CD8-positive, alpha-beta memory T cell (primary cell): ENCODE measurements at regions of chr5 and their contacts with region 1.

Region 1: GRCh38 chr5:99060306-99061261 is 131.8 kb upstream of the CHD1 start:
- DNase-seq: peak; percentile 75 to 89 (median 81)
- H3K4me3 ChIP-seq: no peak overlapping the region
- H3K4me3 Mint-ChIP-seq: peak overlapping the region in 5 of 7 donors; percentile 23 to 68 (median 42)
- H3K27ac ChIP-seq: no peak overlapping the region
- H3K27ac Mint-ChIP-seq: peak overlapping the region in 1 of 8 donors; percentile 22
- H3K4me1 ChIP-seq: peaks cover 5% of the 10 kb centered on the region
- H3K4me1 Mint-ChIP-seq: peaks cover 4 to 9% (median 9%) of the 10 kb centered on the region in 3 donors
- H3K27me3 ChIP-seq: peaks cover 4% of the 10 kb centered on the region
- H3K27me3 Mint-ChIP-seq: peaks cover 3 to 15% of the 10 kb centered on the region in 2 donors

Region 2: DNA sequence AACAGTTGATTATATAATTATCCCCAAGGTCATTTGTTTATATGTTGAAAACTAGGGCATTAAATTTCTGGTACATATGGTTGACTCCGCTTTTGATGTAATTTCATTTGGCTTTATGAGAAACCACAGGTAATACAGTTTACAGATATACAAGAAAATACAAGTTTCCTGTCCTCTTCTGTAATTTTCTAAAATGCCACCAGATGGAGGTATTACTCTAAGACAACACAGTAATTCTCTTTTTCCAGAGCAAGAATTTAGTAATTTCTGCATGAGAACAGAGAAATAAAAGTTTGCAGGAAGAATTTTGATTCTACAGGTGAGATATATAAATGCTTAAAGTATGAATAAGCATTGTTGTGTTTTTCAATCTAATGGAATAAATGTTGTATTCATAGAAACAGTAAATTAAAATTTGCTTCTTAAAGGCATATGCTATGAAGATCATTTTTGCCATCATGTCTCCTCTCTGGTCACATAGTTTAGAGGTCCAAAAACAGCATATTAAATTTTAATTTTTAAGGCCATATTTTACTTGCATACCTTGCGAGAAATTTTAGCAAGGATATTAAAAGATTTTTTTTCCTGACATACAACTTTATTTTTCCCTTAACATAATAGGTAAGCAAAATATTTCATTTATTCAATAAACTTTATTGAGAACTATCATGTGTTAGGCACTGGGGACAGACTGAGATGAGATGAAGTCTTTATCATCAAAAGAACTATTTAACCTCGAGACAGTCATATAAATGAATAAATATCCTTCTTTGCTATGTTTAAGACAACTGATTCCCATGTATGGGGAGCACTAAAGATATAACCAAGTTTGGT is 154.5 kb before region 1 on chr5:
- CTCF ChIA-PET with region 1: interaction called, 35 read pairs
- POLR2A ChIA-PET with region 1: interaction called, 4 read pairs
- DNase-seq: peak in 2 of 5 donors; percentile 47 to 60
- H3K4me3 ChIP-seq: no peak overlapping the region
- H3K4me3 Mint-ChIP-seq: no peak overlapping the region
- H3K27ac ChIP-seq: no peak overlapping the region
- H3K27ac Mint-ChIP-seq: peak overlapping the region in 6 of 8 donors; percentile 0 to 76 (median 52)
- H3K4me1 ChIP-seq: peaks cover 6% of the 10 kb centered on the region
- H3K4me1 Mint-ChIP-seq: peaks cover 44 to 73% (median 60%) of the 10 kb centered on the region in 3 donors
- H3K27me3 ChIP-seq: no peaks in the 10 kb centered on the region
- H3K27me3 Mint-ChIP-seq: no peaks in the 10 kb centered on the region

Region 3: GRCh38 chr5:98913911-98914310 is 146.7 kb before region 1 on chr5:
- CTCF ChIA-PET with region 1: interaction called, 15 read pairs
- POLR2A ChIA-PET with region 1: no interaction called
- DNase-seq: no peak
- H3K4me3 ChIP-seq: no peak overlapping the region
- H3K4me3 Mint-ChIP-seq: peak overlapping the region in 1 of 7 donors; percentile 25
- H3K27ac ChIP-seq: no peak overlapping the region
- H3K27ac Mint-ChIP-seq: peak overlapping the region in 6 of 8 donors; percentile 0 to 47 (median 28)
- H3K4me1 ChIP-seq: peaks cover 36% of the 10 kb centered on the region
- H3K4me1 Mint-ChIP-seq: peaks cover 67 to 90% (median 87%) of the 10 kb centered on the region in 3 donors
- H3K27me3 ChIP-seq: no peaks in the 10 kb centered on the region
- H3K27me3 Mint-ChIP-seq: no peaks in the 10 kb centered on the region

Region 4: DNA sequence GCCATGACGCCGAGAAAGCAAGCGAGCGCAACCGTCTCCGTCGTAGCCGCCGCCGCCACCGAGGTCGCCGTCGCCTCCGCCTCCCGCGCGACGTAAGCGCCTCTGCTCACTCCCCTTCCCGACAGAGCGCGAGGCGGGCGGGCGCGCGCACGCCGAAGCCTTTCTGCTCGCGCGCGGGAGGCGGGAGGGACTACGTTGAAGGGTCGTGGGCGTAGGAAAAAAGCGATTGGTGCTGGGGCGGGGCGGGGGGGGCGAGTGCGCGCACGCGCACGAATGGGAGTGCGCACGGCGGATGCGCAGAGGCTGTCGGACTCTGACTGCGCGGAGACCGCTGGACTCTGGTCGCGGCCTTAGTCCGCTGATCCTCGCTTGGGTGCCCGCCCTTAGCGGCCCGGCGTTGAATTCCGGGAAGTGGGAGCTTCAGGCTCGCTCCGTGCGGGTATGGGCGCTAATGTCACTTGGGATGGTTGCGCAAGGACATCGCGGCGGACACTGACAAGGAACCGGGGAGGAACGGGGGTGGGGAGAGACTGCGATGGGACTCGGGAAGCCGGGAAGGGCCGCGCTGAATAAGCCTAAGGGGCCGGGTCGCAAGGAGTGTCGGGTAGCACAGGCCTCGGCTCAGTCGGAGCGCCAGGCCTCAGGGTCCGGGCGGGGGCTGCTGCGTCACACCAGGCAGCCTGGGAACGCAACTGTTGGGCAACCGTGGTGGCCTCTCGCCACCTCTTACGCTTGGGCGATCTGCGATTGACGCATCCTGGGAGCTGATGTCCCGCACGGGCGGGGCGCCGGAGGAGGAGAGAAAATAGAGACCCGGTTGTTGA is 131.5 kb before region 1 on chr5 and contains the start of gene CHD1:
- CTCF ChIA-PET with region 1: interaction called, 15 read pairs
- POLR2A ChIA-PET with region 1: no interaction called
- DNase-seq: peak; percentile 92 to 97 (median 97)
- H3K4me3 ChIP-seq: peak within 1 kb of the TSS; percentile 96
- H3K4me3 Mint-ChIP-seq: peak within 1 kb of the TSS; percentile 95 to 99 (median 97)
- H3K27ac ChIP-seq: peak within 1 kb of the TSS; percentile 100
- H3K27ac Mint-ChIP-seq: peak within 1 kb of the TSS; percentile 100
- H3K4me1 ChIP-seq: peaks cover 63% of the 10 kb centered on the region
- H3K4me1 Mint-ChIP-seq: peaks cover 67 to 81% (median 78%) of the 10 kb centered on the region in 3 donors
- H3K27me3 ChIP-seq: no peaks in the 10 kb centered on the region
- H3K27me3 Mint-ChIP-seq: peaks cover 0 to 8% of the 10 kb centered on the region in 2 donors
- total RNA-seq, gene CHD1: 70.8 to 73.6 TPM

Region 5: GRCh38 chr5:99020698-99021048 is 39.9 kb before region 1 on chr5:
- CTCF ChIA-PET with region 1: no interaction called
- POLR2A ChIA-PET with region 1: no interaction called
- DNase-seq: no peak
- H3K4me3 ChIP-seq: no peak overlapping the region
- H3K4me3 Mint-ChIP-seq: no peak overlapping the region
- H3K27ac ChIP-seq: no peak overlapping the region
- H3K27ac Mint-ChIP-seq: peak overlapping the region in 1 of 8 donors; percentile 15
- H3K4me1 ChIP-seq: no peaks in the 10 kb centered on the region
- H3K4me1 Mint-ChIP-seq: peaks cover 0 to 7% (median 5%) of the 10 kb centered on the region in 3 donors
- H3K27me3 ChIP-seq: no peaks in the 10 kb centered on the region
- H3K27me3 Mint-ChIP-seq: no peaks in the 10 kb centered on the region

Region 6: GRCh38 chr5:99032234-99033013 is 28.2 kb before region 1 on chr5:
- CTCF ChIA-PET with region 1: interaction called, 15 read pairs
- POLR2A ChIA-PET with region 1: interaction called, 3 read pairs
- DNase-seq: no peak
- H3K4me3 ChIP-seq: peak overlapping the region; percentile 57
- H3K4me3 Mint-ChIP-seq: peak overlapping the region; percentile 60 to 90 (median 87)
- H3K27ac ChIP-seq: peak overlapping the region; percentile 57
- H3K27ac Mint-ChIP-seq: peak overlapping the region; percentile 84 to 99 (median 97)
- H3K4me1 ChIP-seq: peaks cover 31% of the 10 kb centered on the region
- H3K4me1 Mint-ChIP-seq: peaks cover 55 to 85% (median 83%) of the 10 kb centered on the region in 3 donors
- H3K27me3 ChIP-seq: no peaks in the 10 kb centered on the region
- H3K27me3 Mint-ChIP-seq: no peaks in the 10 kb centered on the region

Region 7: GRCh38 chr5:99037668-99038067 is 22.9 kb before region 1 on chr5:
- CTCF ChIA-PET with region 1: interaction called, 15 read pairs
- POLR2A ChIA-PET with region 1: interaction called, 3 read pairs
- DNase-seq: peak; percentile 25 to 83 (median 76)
- H3K4me3 ChIP-seq: peak overlapping the region; percentile 25
- H3K4me3 Mint-ChIP-seq: peak overlapping the region; percentile 13 to 86 (median 73)
- H3K27ac ChIP-seq: no peak overlapping the region
- H3K27ac Mint-ChIP-seq: peak overlapping the region; percentile 73 to 93 (median 90)
- H3K4me1 ChIP-seq: peaks cover 27% of the 10 kb centered on the region
- H3K4me1 Mint-ChIP-seq: peaks cover 53 to 66% (median 61%) of the 10 kb centered on the region in 3 donors
- H3K27me3 ChIP-seq: no peaks in the 10 kb centered on the region
- H3K27me3 Mint-ChIP-seq: no peaks in the 10 kb centered on the region

Region 8: DNA sequence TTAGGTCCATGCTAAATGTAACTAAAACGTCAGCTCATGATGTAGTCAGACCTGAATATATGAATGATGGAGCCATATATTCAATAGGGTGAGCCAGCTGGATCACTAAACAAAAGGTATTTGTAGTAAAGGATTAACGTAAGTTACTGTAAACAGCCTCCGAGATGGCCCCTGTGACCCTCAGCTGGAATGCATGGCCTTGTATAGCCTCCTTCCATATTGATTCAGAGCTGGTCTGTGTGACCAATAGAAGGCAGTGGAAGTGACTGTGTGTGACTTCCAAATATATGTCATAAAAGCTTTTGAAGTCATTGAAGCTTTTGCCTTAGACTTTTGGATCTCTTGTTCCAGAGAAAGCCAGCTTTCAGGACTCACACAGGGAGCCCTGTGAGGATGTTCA is 22.6 kb after region 1 on chr5:
- CTCF ChIA-PET with region 1: no interaction called
- POLR2A ChIA-PET with region 1: no interaction called
- DNase-seq: no peak
- H3K4me3 ChIP-seq: no peak overlapping the region
- H3K4me3 Mint-ChIP-seq: no peak overlapping the region
- H3K27ac ChIP-seq: no peak overlapping the region
- H3K27ac Mint-ChIP-seq: no peak overlapping the region
- H3K4me1 ChIP-seq: no peaks in the 10 kb centered on the region
- H3K4me1 Mint-ChIP-seq: peaks cover 3 to 7% (median 5%) of the 10 kb centered on the region in 3 donors
- H3K27me3 ChIP-seq: no peaks in the 10 kb centered on the region
- H3K27me3 Mint-ChIP-seq: peaks cover 9 to 38% of the 10 kb centered on the region in 2 donors

Region 9: DNA sequence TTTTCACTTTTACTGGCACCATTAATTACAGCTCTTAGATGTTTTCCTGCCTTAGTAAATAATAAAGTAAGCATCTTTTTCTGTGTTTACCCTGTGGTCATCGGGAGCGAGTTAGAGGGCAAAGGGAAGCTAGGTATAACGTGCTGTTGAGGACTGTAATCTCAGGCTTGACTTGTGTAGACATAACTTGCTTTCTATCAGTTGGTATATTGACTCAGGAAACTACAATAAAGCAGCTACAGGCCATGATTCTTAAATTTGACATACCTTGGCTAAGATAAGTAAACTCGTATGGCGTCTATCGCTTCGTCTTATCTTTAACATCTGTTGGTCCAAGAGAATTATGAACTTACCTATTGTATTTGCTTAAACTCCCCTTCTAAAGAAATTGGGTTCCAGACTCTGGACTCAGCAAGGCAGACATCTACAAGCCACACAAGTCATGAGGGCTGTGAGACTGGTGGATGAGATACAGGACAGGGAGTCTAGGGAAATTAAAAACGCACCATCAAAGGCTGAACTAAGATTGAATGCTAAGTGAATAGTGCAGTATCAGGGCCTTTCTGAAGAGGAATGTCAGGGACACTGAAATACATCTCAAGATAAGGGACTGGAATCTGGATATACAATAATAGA is 378.2 kb after region 1 on chr5:
- CTCF ChIA-PET with region 1: no interaction called
- POLR2A ChIA-PET with region 1: no interaction called
- DNase-seq: no peak
- H3K4me3 ChIP-seq: no peak overlapping the region
- H3K4me3 Mint-ChIP-seq: no peak overlapping the region
- H3K27ac ChIP-seq: no peak overlapping the region
- H3K27ac Mint-ChIP-seq: no peak overlapping the region
- H3K4me1 ChIP-seq: no peaks in the 10 kb centered on the region
- H3K4me1 Mint-ChIP-seq: no peaks in the 10 kb centered on the region
- H3K27me3 ChIP-seq: no peaks in the 10 kb centered on the region
- H3K27me3 Mint-ChIP-seq: no peaks in the 10 kb centered on the region